WTC11 (cell line): ENCODE measurements at regions of chr16 and their contacts with region 1.

Region 1: GRCh38 chr16:89922884-89923690 is at the start of gene TUBB3:
- DNase-seq: peak; percentile 85
- ATAC-seq: peak; percentile 17
- H3K4me3 Mint-ChIP-seq: peak within 1 kb of the TSS; percentile 88
- H3K27ac Mint-ChIP-seq: no peak within 1 kb of the TSS
- H3K4me1 Mint-ChIP-seq: peaks cover 19% of the 10 kb centered on the region
- H3K27me3 Mint-ChIP-seq: peaks cover 36% of the 10 kb centered on the region
- CTCF ChIP-seq: no peak
- total RNA-seq, gene TUBB3: 150 to 209 TPM (median 163 TPM) in 3 replicates

Region 2: DNA sequence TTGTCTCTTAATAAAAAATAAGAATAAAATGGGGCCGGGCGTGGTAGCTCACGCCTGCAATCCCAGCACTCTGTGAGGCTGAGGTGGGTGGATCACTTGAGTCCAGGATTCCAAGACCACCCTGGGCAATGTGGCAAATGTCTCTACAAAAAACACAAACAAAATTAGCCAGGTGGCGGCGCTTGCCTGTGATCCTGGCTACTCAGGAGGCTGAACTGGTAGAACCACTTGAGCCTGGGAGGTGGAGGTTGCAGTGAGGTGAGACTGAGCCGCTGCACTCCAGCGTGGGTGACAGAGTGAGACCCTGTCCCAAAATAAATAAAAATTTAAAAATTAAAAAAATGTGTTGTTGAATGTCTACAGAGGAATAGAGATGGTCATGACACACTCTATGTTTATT is 22.6 kb after region 1 on chr16:
- CTCF ChIA-PET with region 1: interaction called, 16 read pairs
- POLR2A ChIA-PET with region 1: interaction called, 7 read pairs
- DNase-seq: peak; percentile 43
- ATAC-seq: peak; percentile 5; the same call in 1 of the 2 replicates
- H3K4me3 Mint-ChIP-seq: no peak overlapping the region
- H3K27ac Mint-ChIP-seq: no peak overlapping the region
- H3K4me1 Mint-ChIP-seq: peaks cover 6% of the 10 kb centered on the region; the same call in 1 of the 2 replicates
- H3K27me3 Mint-ChIP-seq: peaks cover 49% of the 10 kb centered on the region
- CTCF ChIP-seq: no peak

Region 3: GRCh38 chr16:90001761-90002503 is 78.8 kb after region 1 on chr16:
- CTCF ChIA-PET with region 1: no interaction called
- POLR2A ChIA-PET with region 1: no interaction called
- DNase-seq: no peak
- ATAC-seq: no peak
- H3K4me3 Mint-ChIP-seq: no peak overlapping the region
- H3K27ac Mint-ChIP-seq: no peak overlapping the region
- H3K4me1 Mint-ChIP-seq: peaks cover 4% of the 10 kb centered on the region; the same call in 1 of the 2 replicates
- H3K27me3 Mint-ChIP-seq: no peaks in the 10 kb centered on the region
- CTCF ChIP-seq: no peak